Gastrocnemius medialis (tissue), 4 donors: ENCODE measurements at regions of chr6 and their contacts with region 1.

Region 1: DNA sequence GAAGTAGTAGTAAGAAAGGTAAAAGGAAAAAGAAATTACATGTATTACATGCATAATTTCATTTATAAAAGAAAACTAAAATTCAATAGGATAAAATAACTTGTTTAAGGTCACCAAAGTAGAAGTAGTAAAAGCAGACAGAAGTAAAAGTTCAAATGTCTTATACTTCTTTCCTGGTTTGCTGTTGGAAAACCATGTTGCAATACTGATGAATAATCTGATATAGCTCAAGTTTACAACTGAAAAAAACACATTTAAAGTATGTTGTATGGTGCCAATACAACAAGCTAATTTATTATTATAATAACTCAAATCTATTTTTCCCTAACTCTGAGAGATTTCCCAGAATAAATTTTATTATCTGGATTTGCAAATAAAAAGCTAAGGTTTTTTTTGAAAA is 78.3 kb downstream of the PHIP start:
- DNase-seq: no peak
- ATAC-seq: no peak
- H3K4me3 ChIP-seq: no peak overlapping the region
- H3K27ac ChIP-seq: no peak overlapping the region
- H3K4me1 ChIP-seq: no peaks in the 10 kb centered on the region
- H3K27me3 ChIP-seq: no peaks in the 10 kb centered on the region
- CTCF ChIP-seq: no peak
- POLR2A ChIP-seq: no peak

Region 2: GRCh38 chr6:78300885-78301284 is 698.9 kb before region 1 on chr6:
- in situ Hi-C with region 1: no loop called
- intact Hi-C with region 1: no loop called
- DNase-seq: no peak
- ATAC-seq: no peak
- H3K4me3 ChIP-seq: no peak overlapping the region
- H3K27ac ChIP-seq: no peak overlapping the region
- H3K4me1 ChIP-seq: no peaks in the 10 kb centered on the region
- H3K27me3 ChIP-seq: no peaks in the 10 kb centered on the region
- CTCF ChIP-seq: no peak
- POLR2A ChIP-seq: no peak

Region 3: GRCh38 chr6:78810146-78810545 is 189.6 kb before region 1 on chr6:
- in situ Hi-C with region 1: no loop called
- intact Hi-C with region 1: no loop called
- DNase-seq: no peak
- ATAC-seq: no peak
- H3K4me3 ChIP-seq: no peak overlapping the region
- H3K27ac ChIP-seq: no peak overlapping the region
- H3K4me1 ChIP-seq: no peaks in the 10 kb centered on the region
- H3K27me3 ChIP-seq: no peaks in the 10 kb centered on the region
- CTCF ChIP-seq: no peak
- POLR2A ChIP-seq: no peak

Region 4: DNA sequence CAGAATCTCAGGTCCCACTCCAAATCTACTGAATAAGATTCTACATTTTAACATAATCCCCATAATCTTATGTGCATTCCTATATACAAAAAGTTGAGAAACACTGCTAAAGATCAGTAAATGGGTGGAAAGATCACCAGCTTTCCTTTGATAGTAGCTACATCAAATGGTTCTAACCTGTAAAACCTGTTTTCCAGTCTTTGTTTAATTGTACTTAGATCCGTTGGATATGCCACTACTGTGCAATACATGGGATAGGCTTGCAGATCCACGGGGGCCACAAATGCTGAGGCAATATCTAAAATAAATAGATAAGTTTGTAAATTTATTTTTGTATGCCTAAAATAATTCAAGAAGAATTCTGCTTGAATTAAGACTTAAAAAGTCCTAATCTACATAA is 38.2 kb before region 1 on chr6:
- in situ Hi-C with region 1: no loop called
- intact Hi-C with region 1: loop called (anchors 5 kb)
- DNase-seq: no peak
- ATAC-seq: no peak
- H3K4me3 ChIP-seq: no peak overlapping the region
- H3K27ac ChIP-seq: no peak overlapping the region
- H3K4me1 ChIP-seq: no peaks in the 10 kb centered on the region
- H3K27me3 ChIP-seq: no peaks in the 10 kb centered on the region
- CTCF ChIP-seq: no peak
- POLR2A ChIP-seq: no peak